ENCODE measurements at regions of chr14 and their contacts with region 1.

Region 1: GRCh38 chr14:33201116-33201515 is 262.4 kb downstream of the NPAS3 start:
- DNase-seq: no peak
- H3K4me3 Mint-ChIP-seq: no peak overlapping the region
- H3K27ac Mint-ChIP-seq: no peak overlapping the region
- H3K4me1 Mint-ChIP-seq: no peaks in the 10 kb centered on the region
- H3K27me3 Mint-ChIP-seq: no peaks in the 10 kb centered on the region
- CTCF ChIP-seq: no peak

Region 2: DNA sequence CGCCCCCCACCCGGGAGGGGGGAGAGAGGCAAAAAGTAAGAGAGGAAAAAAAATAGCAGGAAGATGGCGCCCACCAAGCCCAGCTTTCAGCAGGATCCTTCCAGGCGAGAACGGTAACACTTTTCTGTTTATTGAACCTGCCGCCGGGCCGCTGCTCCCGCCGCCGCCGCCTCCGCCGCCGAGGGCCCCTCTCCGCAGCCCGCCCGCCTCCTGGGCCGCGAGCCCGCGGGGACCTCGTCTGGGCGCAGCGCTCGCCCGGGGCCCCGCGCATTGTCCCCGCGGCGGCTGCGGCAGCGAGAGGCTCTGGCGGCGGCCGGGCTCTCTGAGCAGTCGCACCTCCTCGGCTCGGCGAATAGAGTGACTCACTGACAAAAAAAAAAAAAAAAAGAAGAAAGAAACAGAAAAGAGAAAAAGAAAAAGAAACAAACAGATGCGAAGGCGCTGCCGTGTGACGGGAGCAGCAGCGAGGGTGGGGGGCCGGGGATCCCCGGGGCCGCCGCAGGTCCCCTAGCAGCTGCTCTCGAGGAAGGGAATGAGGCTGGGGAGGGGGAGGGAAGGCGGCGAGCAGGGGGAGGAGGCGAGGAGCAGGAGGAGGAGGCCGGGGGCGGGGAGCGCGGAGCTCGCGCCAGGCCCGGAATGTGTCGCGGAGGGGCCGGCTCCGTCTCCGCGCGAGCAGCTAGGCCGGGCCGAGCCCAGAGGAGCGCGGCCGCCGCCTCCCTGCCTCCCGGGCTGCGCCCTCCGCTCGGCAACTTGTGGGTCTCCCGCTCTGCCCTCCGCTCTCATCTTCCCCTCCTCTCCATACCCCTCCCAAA is 261.7 kb before region 1 on chr14:
- CTCF ChIA-PET with region 1: no interaction called
- POLR2A ChIA-PET with region 1: no interaction called
- intact Hi-C with region 1: no loop called
- DNase-seq: peak; percentile 38
- H3K4me3 Mint-ChIP-seq: peak overlapping the region; percentile 83
- H3K27ac Mint-ChIP-seq: peak overlapping the region; percentile 31
- H3K4me1 Mint-ChIP-seq: peaks cover 6% of the 10 kb centered on the region
- H3K27me3 Mint-ChIP-seq: peaks cover 29% of the 10 kb centered on the region
- CTCF ChIP-seq: no peak

Region 3: GRCh38 chr14:33254861-33255395 is 53.8 kb after region 1 on chr14:
- CTCF ChIA-PET with region 1: no interaction called
- POLR2A ChIA-PET with region 1: no interaction called
- intact Hi-C with region 1: loop called (anchors 5 kb)
- DNase-seq: no peak
- H3K4me3 Mint-ChIP-seq: no peak overlapping the region
- H3K27ac Mint-ChIP-seq: no peak overlapping the region
- H3K4me1 Mint-ChIP-seq: no peaks in the 10 kb centered on the region
- H3K27me3 Mint-ChIP-seq: peaks cover 23% of the 10 kb centered on the region
- CTCF ChIP-seq: no peak

Region 4: DNA sequence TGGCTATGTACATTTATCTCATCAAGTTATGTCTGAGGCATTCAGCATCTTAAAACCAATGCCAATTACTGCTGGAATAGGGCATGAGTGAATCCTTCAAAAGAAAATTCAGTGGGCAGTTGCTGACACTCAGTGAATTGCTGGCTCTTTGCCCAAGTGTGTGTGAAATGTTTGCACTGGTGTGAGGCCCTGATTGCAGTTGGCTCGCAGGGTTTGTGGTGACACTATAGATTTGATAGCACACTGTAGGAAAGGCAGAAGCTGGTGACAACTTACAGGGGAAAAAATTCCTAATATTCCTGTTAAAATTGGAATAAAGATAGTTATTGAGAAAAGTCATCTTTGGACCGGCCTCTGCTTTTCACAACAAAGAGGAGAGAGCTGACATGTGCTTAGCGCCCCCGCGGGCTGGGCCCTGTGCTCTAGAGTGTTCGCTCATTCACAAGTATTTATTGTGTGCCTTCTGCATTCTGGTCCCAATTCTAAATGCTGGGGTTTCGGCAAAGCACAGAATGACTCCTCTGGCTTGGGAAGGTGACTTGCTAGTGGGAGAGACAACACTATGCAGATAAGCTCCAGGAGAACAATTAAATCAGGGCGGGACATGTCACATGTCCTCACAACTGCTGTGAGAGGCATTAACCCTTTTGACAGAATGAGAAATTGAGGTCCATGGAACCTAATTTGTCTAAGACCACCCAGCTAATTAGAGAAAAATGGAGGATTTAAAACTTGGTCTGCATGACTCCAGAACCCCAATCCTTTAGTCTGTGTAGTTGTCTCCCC is 156.3 kb after region 1 on chr14:
- CTCF ChIA-PET with region 1: no interaction called
- POLR2A ChIA-PET with region 1: no interaction called
- intact Hi-C with region 1: no loop called
- DNase-seq: peak; percentile 5
- H3K4me3 Mint-ChIP-seq: no peak overlapping the region
- H3K27ac Mint-ChIP-seq: no peak overlapping the region
- H3K4me1 Mint-ChIP-seq: no peaks in the 10 kb centered on the region
- H3K27me3 Mint-ChIP-seq: no peaks in the 10 kb centered on the region
- CTCF ChIP-seq: no peak